OCI-LY7 (cell line): ENCODE measurements at regions of chr3 and their contacts with region 1.

Region 1: DNA sequence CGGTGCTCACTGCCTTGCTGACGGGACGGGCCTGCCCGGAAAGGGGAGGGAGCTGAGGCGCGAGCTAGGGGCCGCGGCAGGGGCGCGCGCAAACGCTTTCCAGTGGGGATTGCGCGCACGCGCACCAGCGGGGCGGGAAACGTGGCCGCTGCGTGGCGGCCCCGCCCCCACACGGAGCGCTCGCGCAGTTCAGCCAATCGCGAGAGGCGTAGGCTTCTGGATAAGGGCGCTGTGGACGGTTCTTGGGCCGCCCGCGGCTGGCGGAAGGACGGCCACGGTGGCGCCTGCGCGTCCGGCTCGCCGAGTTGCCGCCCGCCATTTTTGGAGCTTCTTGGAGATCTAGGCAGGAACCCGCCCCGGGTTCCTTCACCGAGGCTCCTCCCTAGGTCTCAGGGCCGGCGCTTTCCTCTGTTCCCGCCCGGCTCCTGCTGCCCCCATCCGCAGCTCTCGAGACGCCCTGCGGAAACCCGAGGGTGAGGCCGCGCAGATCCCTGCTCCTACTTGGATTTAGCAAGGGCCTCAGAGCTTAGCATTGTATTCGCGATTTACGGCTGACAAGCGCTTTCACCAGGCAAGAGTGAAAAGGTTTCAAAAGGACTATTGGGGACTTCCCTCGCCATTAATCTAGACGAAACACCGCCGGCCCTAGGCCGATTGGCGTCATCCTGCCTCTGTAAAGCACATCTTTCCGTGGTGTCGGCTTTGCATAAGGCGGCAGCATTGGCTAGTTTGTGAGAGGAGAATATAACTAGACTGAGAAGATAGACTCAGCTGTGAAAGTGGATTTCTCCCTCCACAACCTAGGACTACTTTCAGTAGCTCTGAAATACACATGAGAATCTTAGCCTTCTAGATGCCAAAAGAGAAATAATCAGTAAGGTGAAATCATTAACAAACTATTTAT is 496 bp upstream of the STAG1 start:
- DNase-seq: peak; percentile 99
- H3K4me3 ChIP-seq: peak overlapping the region; percentile 90
- H3K27ac ChIP-seq: peak overlapping the region; percentile 94
- H3K4me1 ChIP-seq: peaks cover 33% of the 10 kb centered on the region
- CTCF ChIP-seq: no peak; the same call in 1 of the 2 replicates

Region 2: GRCh38 chr3:136250226-136250902 is 502.3 kb before region 1 on chr3 and contains the start of gene PCCB:
- CTCF ChIA-PET with region 1: interaction called, 5 read pairs
- POLR2A ChIA-PET with region 1: interaction called, 3 read pairs
- intact Hi-C with region 1: loop called (anchors 1 kb)
- DNase-seq: peak; percentile 96
- H3K4me3 ChIP-seq: peak within 1 kb of the TSS; percentile 71
- H3K27ac ChIP-seq: peak within 1 kb of the TSS; percentile 83
- H3K4me1 ChIP-seq: peaks cover 61% of the 10 kb centered on the region
- CTCF ChIP-seq: peak; percentile 78
- total RNA-seq, gene PCCB: 38.3 and 39.7 TPM in 2 replicates

Region 3: DNA sequence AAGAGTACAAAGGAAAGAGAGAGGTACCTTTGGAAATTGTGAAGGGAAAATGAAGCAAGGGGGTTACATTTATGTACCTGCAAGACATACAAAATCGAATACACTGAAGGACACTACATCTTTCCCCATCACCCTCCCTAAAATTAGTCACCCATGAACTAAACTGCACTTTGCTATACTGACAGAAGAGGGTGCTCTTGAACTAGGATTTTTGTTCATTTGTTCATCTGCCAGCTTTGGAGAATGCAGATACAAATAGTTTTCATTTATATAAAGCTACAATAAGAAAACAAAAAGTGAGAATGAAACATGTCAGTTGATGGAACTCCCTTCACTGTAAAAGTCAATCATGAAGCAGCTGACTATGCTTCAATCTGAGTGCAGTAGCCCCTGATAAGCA is 446.8 kb before region 1 on chr3:
- CTCF ChIA-PET with region 1: interaction called, 4 read pairs
- POLR2A ChIA-PET with region 1: interaction called, 4 read pairs
- intact Hi-C with region 1: loop called (anchors 1 kb)
- DNase-seq: peak; percentile 62
- H3K4me3 ChIP-seq: no peak overlapping the region
- H3K27ac ChIP-seq: no peak overlapping the region
- H3K4me1 ChIP-seq: no peaks in the 10 kb centered on the region
- CTCF ChIP-seq: peak; percentile 85

Region 4: GRCh38 chr3:136390574-136390973 is 362.1 kb before region 1 on chr3:
- CTCF ChIA-PET with region 1: interaction called, 9 read pairs
- POLR2A ChIA-PET with region 1: interaction called, 9 read pairs
- intact Hi-C with region 1: loop called (anchors 1 kb)
- DNase-seq: no peak
- H3K4me3 ChIP-seq: no peak overlapping the region
- H3K27ac ChIP-seq: no peak overlapping the region
- H3K4me1 ChIP-seq: no peaks in the 10 kb centered on the region
- CTCF ChIP-seq: no peak

Region 5: DNA sequence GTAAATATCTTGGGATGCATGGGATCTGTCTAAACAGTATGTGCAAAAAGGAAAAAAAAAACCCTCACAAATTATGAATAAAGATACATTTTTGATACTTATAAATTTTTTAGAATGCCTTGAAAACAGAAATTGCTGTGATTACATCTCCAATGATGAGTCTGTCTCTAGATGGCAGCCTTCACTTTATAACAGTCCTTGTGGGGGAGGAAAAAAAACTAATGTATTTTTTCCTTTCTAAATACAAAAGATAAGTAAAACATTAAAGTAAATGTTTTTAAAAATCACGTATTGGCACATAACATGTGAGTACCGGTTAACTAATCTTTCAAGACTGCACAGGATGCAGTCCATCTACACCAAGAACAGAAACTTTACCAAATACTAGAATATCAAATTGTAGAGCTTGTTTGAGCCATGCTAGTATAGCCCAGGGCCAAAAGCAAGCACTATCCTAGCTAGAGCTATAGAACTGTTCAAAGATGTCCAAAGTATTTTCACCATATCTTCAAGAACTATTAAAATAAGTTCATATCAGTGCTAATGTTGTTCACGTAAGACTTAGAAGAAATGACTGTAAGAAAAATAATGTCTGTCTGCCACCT is 206.9 kb before region 1 on chr3:
- CTCF ChIA-PET with region 1: interaction called, 3 read pairs
- POLR2A ChIA-PET with region 1: interaction called, 6 read pairs
- intact Hi-C with region 1: loop called (anchors 2 kb)
- DNase-seq: no peak
- H3K4me3 ChIP-seq: no peak overlapping the region
- H3K27ac ChIP-seq: no peak overlapping the region
- H3K4me1 ChIP-seq: peaks cover 10% of the 10 kb centered on the region
- CTCF ChIP-seq: peak; percentile 53; the same call in 1 of the 2 replicates

Region 6: GRCh38 chr3:137013955-137014688 is 261.4 kb after region 1 on chr3:
- CTCF ChIA-PET with region 1: interaction called, 21 read pairs
- POLR2A ChIA-PET with region 1: interaction called, 3 read pairs
- intact Hi-C with region 1: loop called (anchors 1 kb)
- DNase-seq: peak; percentile 84
- H3K4me3 ChIP-seq: no peak overlapping the region
- H3K27ac ChIP-seq: no peak overlapping the region
- H3K4me1 ChIP-seq: no peaks in the 10 kb centered on the region
- CTCF ChIP-seq: peak; percentile 95